CD4-positive, alpha-beta memory T cell (primary cell): ENCODE measurements at regions of chr13 and their contacts with region 1.

Region 1: GRCh38 chr13:24683838-24684599 is 3.8 kb downstream of the ATP12A start:
- DNase-seq: peak; percentile 45 to 56 (median 54)
- H3K4me3 ChIP-seq: peak overlapping the region in 1 of 2 donors; percentile 11
- H3K4me3 Mint-ChIP-seq: peak overlapping the region in 6 of 8 donors; percentile 40 to 71 (median 62)
- H3K27ac ChIP-seq: no peak overlapping the region
- H3K27ac Mint-ChIP-seq: peak overlapping the region in 6 of 7 donors; percentile 2 to 54 (median 40)
- H3K4me1 ChIP-seq: peaks cover 31% of the 10 kb centered on the region
- H3K4me1 Mint-ChIP-seq: peaks cover 22 to 44% (median 34%) of the 10 kb centered on the region in 4 donors
- H3K27me3 ChIP-seq: peaks cover 13% of the 10 kb centered on the region
- H3K27me3 Mint-ChIP-seq: peaks cover 19% of the 10 kb centered on the region in 2 donors

Region 2: GRCh38 chr13:24671386-24672107 is 12.5 kb before region 1 on chr13:
- CTCF ChIA-PET with region 1: interaction called, 19 read pairs
- POLR2A ChIA-PET with region 1: no interaction called
- intact Hi-C with region 1: no loop called
- DNase-seq: peak in 2 of 5 donors; percentile 12 to 29
- H3K4me3 ChIP-seq: no peak overlapping the region
- H3K4me3 Mint-ChIP-seq: peak overlapping the region in 1 of 8 donors; percentile 10
- H3K27ac ChIP-seq: no peak overlapping the region
- H3K27ac Mint-ChIP-seq: peak overlapping the region in 1 of 7 donors; percentile 29
- H3K4me1 ChIP-seq: peaks cover 10% of the 10 kb centered on the region
- H3K4me1 Mint-ChIP-seq: peaks cover 4 to 10% (median 7%) of the 10 kb centered on the region in 4 donors
- H3K27me3 ChIP-seq: no peaks in the 10 kb centered on the region
- H3K27me3 Mint-ChIP-seq: peaks cover under 1 to 8% of the 10 kb centered on the region in 2 donors

Region 3: GRCh38 chr13:24709186-24709913 is 25.3 kb after region 1 on chr13:
- CTCF ChIA-PET with region 1: interaction called, 7 read pairs
- POLR2A ChIA-PET with region 1: no interaction called
- intact Hi-C with region 1: loop called (anchors 2 kb)
- DNase-seq: peak; percentile 68 to 87 (median 78)
- H3K4me3 ChIP-seq: peak overlapping the region in 1 of 2 donors; percentile 11
- H3K4me3 Mint-ChIP-seq: peak overlapping the region; percentile 52 to 82 (median 70)
- H3K27ac ChIP-seq: no peak overlapping the region
- H3K27ac Mint-ChIP-seq: peak overlapping the region; percentile 81 to 90 (median 86)
- H3K4me1 ChIP-seq: peaks cover 13% of the 10 kb centered on the region
- H3K4me1 Mint-ChIP-seq: peaks cover 12 to 16% (median 13%) of the 10 kb centered on the region in 4 donors
- H3K27me3 ChIP-seq: no peaks in the 10 kb centered on the region
- H3K27me3 Mint-ChIP-seq: peaks cover under 1 to 1% of the 10 kb centered on the region in 2 donors